ENCODE measurements at regions of chr15 and their contacts with region 1.

Region 1: DNA sequence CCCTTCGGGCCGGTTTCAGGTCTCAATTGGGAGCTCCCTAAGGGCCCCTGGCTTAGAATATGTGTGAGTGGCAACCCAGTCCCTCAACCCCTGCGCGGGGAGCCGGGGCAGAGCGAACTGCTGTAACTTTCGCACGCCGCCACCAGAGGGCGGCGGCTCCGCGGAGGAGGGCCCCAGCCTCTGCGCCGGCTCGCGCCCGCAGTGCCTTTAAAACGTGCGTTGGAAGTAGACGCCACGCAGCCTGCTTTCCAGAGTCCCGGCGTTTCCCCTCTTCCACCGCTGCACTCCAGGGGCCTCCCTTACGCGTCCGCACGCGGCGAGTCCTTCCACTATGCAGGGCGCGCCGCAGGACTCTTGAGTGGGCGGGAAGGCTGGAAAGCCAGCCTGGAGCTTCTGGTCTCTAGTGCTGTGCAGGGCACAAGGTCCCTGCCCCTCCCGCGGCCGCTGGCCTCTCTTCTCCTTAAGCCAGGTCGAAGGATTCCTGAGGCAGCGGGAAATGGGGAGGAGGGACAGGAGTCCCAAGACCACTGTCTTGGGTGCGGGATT is 23.7 kb upstream of the RNU6-1 start:
- DNase-seq: peak; percentile 85
- ATAC-seq: peak; percentile 95
- H3K4me3 Mint-ChIP-seq: peak overlapping the region; percentile 65
- H3K27ac Mint-ChIP-seq: no peak overlapping the region
- H3K4me1 Mint-ChIP-seq: peaks cover 18% of the 10 kb centered on the region
- H3K27me3 Mint-ChIP-seq: peaks cover 26% of the 10 kb centered on the region
- CTCF ChIP-seq: peak; percentile 91

Region 2: GRCh38 chr15:67884514-67885487 is 21.3 kb after region 1 on chr15:
- CTCF ChIA-PET with region 1: interaction called, 12 read pairs
- POLR2A ChIA-PET with region 1: no interaction called
- DNase-seq: peak; percentile 76
- ATAC-seq: peak; percentile 94
- H3K4me3 Mint-ChIP-seq: peak overlapping the region; percentile 64
- H3K27ac Mint-ChIP-seq: peak overlapping the region; percentile 58; the same call in 1 of the 2 replicates
- H3K4me1 Mint-ChIP-seq: peaks cover 26% of the 10 kb centered on the region
- H3K27me3 Mint-ChIP-seq: peaks cover 23% of the 10 kb centered on the region
- CTCF ChIP-seq: no peak

Region 3: GRCh38 chr15:67998599-67999122 is 135.1 kb after region 1 on chr15:
- CTCF ChIA-PET with region 1: no interaction called
- POLR2A ChIA-PET with region 1: no interaction called
- DNase-seq: no peak
- ATAC-seq: no peak
- H3K4me3 Mint-ChIP-seq: no peak overlapping the region
- H3K27ac Mint-ChIP-seq: no peak overlapping the region
- H3K4me1 Mint-ChIP-seq: peaks cover 10% of the 10 kb centered on the region
- H3K27me3 Mint-ChIP-seq: peaks cover 2% of the 10 kb centered on the region
- CTCF ChIP-seq: no peak

Region 4: GRCh38 chr15:68045289-68046265 is 182.1 kb after region 1 on chr15:
- CTCF ChIA-PET with region 1: interaction called, 10 read pairs
- POLR2A ChIA-PET with region 1: no interaction called
- DNase-seq: peak; percentile 16
- ATAC-seq: peak; percentile 77
- H3K4me3 Mint-ChIP-seq: no peak overlapping the region
- H3K27ac Mint-ChIP-seq: no peak overlapping the region
- H3K4me1 Mint-ChIP-seq: 0 out of 2 replicates have a peak, but pooled peaks cover 2% of the 10 kb centered on the region
- H3K27me3 Mint-ChIP-seq: no peaks in the 10 kb centered on the region
- CTCF ChIP-seq: no peak

Region 5: GRCh38 chr15:68154923-68155559 is 291.5 kb after region 1 on chr15:
- CTCF ChIA-PET with region 1: interaction called, 43 read pairs
- POLR2A ChIA-PET with region 1: no interaction called
- DNase-seq: peak; percentile 28
- ATAC-seq: peak; percentile 59
- H3K4me3 Mint-ChIP-seq: no peak overlapping the region
- H3K27ac Mint-ChIP-seq: 0 out of 2 replicates have a peak overlapping the region, but pooled peaks have one; percentile 67
- H3K4me1 Mint-ChIP-seq: no peaks in the 10 kb centered on the region
- H3K27me3 Mint-ChIP-seq: no peaks in the 10 kb centered on the region
- CTCF ChIP-seq: peak; percentile 46

Measured in WTC11 (cell line).